Right ventricle myocardium inferior (tissue), 1 donor: ENCODE measurements at regions of chr17 and their contacts with region 1.

Region 1: GRCh38 chr17:65198653-65199382 is 61.6 kb downstream of the RGS9 start:
- DNase-seq: no peak
- ATAC-seq: peak; percentile 56

Region 2: GRCh38 chr17:64773836-64774761 is 424.7 kb before region 1 on chr17:
- intact Hi-C with region 1: loop called (anchors 10 kb)
- DNase-seq: no peak
- ATAC-seq: no peak

Region 3: DNA sequence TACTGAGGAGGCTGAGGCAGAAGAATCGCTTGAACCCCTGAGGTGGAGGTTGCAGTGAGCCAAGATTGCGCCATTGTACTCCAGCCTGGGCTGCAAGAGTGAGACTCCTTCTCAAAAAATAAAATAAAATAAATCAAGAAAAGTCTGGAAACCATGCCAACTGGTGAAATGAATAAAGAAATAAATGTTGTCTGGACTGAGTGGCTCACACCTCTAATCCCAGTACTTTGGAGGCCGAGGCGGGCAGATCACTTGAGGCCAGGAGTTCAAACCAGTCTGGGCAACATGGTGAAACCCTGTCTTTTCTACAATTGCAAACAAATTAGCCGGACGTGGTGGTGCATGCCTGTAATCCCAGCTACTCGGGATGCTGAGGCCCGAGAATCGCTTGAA is 278.8 kb before region 1 on chr17:
- intact Hi-C with region 1: loop called (anchors 10 kb)
- DNase-seq: no peak
- ATAC-seq: no peak

Region 4: DNA sequence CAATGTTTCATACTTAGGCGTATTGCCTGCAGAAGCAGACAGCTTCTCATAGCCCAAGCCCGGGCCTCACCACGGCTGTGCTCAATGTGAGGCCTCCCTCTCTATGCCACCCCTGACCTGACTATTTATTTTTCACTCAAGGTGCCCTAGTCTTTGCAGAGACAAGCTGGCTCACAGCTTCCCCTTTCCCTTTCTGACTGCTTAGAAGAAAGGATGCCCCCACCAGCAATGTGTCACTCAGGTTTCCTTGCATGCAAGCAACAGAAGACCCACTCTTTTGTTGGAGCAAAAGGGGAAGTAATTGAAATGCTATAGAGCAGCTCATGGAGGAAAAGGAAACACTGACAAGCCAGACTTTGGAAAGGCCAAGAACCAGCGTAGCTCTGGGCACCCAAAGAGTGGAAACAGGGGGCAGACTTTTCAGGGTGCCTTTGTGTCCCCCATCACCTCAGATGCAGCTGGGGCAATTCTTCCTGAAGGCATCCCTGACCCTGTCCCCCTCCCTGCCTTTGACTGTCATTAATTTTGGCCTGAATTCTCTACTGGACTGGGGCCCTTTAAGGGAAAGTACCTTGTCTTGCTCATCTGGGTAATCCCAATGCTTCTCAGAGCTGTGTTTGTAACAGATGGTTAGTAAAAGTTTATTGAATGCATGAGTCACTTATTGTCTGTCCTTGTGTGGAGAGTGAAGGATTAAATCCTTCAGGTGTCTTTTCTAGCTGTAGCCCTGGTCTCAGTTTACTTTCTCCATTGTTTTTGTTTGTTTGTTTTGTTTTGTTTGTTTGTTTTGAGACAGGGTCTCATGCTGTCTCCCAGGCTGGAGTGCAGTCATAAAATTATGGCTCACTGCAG is 43.8 kb before region 1 on chr17:
- intact Hi-C with region 1: no loop called
- DNase-seq: no peak
- ATAC-seq: no peak